Psoas muscle (tissue), 8 donors: ENCODE measurements at regions of chr6 and their contacts with region 1.

Region 1: GRCh38 chr6:5365436-5366195 is 104.3 kb downstream of the FARS2 start:
- DNase-seq: no peak
- ATAC-seq: no peak
- H3K4me3 ChIP-seq: no peak overlapping the region
- H3K27ac ChIP-seq: no peak overlapping the region
- H3K4me1 ChIP-seq: peaks cover 16% of the 10 kb centered on the region
- H3K27me3 ChIP-seq: no peaks in the 10 kb centered on the region
- CTCF ChIP-seq: no peak

Region 2: GRCh38 chr6:5053038-5053437 is 312.6 kb before region 1 on chr6:
- intact Hi-C with region 1: no loop called
- DNase-seq: no peak
- ATAC-seq: no peak
- H3K4me3 ChIP-seq: no peak overlapping the region
- H3K27ac ChIP-seq: no peak overlapping the region
- H3K4me1 ChIP-seq: no peaks in the 10 kb centered on the region
- H3K27me3 ChIP-seq: no peaks in the 10 kb centered on the region
- CTCF ChIP-seq: no peak

Region 3: GRCh38 chr6:5103250-5103649 is 262.4 kb before region 1 on chr6:
- intact Hi-C with region 1: no loop called
- DNase-seq: no peak
- ATAC-seq: no peak
- H3K4me3 ChIP-seq: no peak overlapping the region
- H3K27ac ChIP-seq: no peak overlapping the region
- H3K4me1 ChIP-seq: peaks cover 8% of the 10 kb centered on the region
- H3K27me3 ChIP-seq: no peaks in the 10 kb centered on the region
- CTCF ChIP-seq: no peak

Region 4: GRCh38 chr6:5323979-5324378 is 41.6 kb before region 1 on chr6:
- intact Hi-C with region 1: loop called in 1 of 2 experiments (anchors 5 kb)
- DNase-seq: no peak
- ATAC-seq: no peak
- H3K4me3 ChIP-seq: no peak overlapping the region
- H3K27ac ChIP-seq: no peak overlapping the region
- H3K4me1 ChIP-seq: no peaks in the 10 kb centered on the region
- H3K27me3 ChIP-seq: no peaks in the 10 kb centered on the region
- CTCF ChIP-seq: no peak

Region 5: GRCh38 chr6:5403609-5404008 is 38.0 kb after region 1 on chr6:
- intact Hi-C with region 1: no loop called
- DNase-seq: no peak
- ATAC-seq: no peak
- H3K4me3 ChIP-seq: no peak overlapping the region
- H3K27ac ChIP-seq: no peak overlapping the region
- H3K4me1 ChIP-seq: no peaks in the 10 kb centered on the region
- H3K27me3 ChIP-seq: no peaks in the 10 kb centered on the region
- CTCF ChIP-seq: no peak